ENCODE measurements at regions of chrX and their contacts with region 1.

Region 1: GRCh38 chrX:110853610-110854009 is 58.0 kb upstream of the CHRDL1 start:
- DNase-seq: peak in 6 of 10 donors; percentile 10 to 79 (median 42)

Region 2: DNA sequence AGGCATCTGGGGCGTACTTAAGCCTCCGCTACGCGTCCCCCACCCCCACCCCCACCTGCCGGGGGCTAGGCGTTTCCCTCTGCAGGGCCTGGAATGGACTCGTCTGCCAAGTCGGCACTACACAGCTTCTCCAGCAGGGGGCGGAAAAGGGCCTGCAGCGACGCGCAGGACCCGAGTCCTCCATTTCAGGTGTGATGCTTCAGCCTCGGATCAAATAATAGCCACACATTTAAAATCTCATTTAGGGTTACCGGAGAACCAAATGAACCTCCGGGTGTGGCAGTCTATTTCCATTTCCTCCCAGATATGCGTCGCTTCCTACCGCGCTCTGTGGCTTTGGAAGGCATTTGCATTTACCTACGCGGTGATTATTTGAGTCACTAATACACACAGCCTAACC is 245.3 kb after region 1 on chrX:
- intact Hi-C with region 1: loop called (anchors 5 kb)
- DNase-seq: peak in 9 of 10 donors; percentile 34 to 90 (median 47)

Region 3: DNA sequence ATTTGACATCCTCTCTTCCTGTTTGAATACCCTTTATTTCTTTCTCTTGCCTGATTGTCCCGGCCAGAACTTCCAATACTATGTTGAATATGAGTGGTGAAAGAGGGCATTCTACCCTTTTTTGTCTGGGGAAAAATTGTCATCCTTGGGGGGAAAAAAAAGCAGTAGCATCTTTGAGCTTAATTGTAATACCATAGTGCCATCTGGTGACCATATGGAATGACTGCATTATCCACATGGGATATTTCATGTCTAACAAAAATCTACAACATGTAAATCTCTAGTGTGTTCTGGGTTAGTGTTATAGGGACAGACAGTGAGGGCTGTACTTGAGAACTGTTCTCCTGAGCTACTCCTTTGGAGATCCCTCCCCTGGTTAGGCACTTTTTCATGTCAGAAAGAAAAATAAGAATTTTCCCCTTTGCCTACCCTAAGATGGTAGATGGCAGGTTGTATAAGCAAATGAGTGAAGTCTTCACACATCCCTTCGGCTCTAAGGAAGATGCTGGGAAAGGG is 390.7 kb after region 1 on chrX:
- intact Hi-C with region 1: loop called (anchors 5 kb)
- DNase-seq: no peak

Region 4: DNA sequence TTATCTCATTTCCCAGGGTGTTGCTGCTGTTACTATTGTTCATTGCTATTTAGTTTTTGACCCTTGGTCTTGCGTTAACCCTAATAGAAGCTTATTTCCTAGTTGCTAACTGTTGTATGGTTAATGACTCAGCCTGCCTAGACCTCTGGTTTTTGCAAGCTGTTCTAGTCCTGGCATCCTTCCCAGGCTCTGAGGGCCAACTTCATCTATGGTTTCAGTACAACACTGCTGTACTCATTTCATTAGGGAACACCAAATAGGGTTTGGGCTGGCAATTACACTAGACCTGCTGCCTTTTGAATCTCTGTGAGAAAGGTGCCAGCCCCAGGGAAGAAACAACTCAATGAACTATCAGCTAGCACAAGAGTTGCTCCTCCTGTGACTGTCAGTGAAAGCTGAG is 498.8 kb after region 1 on chrX:
- intact Hi-C with region 1: no loop called
- DNase-seq: peak in 3 of 10 donors; percentile 7 to 12 (median 10)

Measured in posterior cingulate gyrus (tissue), 11 donors.